Activated CD4-positive, alpha-beta T cell treated with anti-CD3 and anti-CD28 coated beads, Interleukin-2, amount 10 ng/mL, durations not matched to agents 24 days and 14 days (primary cell): ENCODE measurements at regions of chr11 and their contacts with region 1.

Region 1: GRCh38 chr11:94151903-94152677 is 23.4 kb downstream of the PANX1 start:
- DNase-seq: peak; percentile 55
- H3K4me3 Mint-ChIP-seq: no peak overlapping the region
- H3K27ac Mint-ChIP-seq: peak overlapping the region; percentile 71
- H3K4me1 Mint-ChIP-seq: peaks cover 55% of the 10 kb centered on the region
- H3K27me3 Mint-ChIP-seq: no peaks in the 10 kb centered on the region

Region 2: DNA sequence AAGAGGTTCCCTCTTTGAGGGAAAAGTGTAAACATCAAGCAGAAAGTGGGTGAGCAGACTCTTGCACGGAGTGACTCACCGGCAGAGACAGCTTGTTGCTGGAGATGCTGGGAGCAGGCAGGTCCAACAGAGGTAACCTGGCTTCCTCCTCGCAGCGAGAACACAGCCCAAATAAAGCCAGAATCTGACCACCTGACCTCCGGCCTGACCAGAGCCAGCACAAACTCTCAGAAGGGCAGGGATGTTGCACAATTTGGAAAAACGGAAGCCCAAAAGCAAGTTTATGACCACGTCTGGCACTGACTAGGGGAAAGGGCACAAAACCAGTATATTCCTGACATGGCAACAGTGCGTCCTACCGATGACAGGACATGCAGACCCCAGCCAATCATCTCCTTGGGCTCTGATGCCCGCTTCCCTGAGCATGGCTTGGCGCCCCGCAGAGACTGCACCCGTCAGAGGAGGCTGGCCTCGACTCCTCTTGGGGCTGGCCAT is 614.3 kb before region 1 on chr11:
- intact Hi-C with region 1: loop called (anchors 5 kb)
- DNase-seq: no peak
- H3K4me3 Mint-ChIP-seq: no peak overlapping the region
- H3K27ac Mint-ChIP-seq: no peak overlapping the region
- H3K4me1 Mint-ChIP-seq: peaks cover 46% of the 10 kb centered on the region
- H3K27me3 Mint-ChIP-seq: no peaks in the 10 kb centered on the region

Region 3: DNA sequence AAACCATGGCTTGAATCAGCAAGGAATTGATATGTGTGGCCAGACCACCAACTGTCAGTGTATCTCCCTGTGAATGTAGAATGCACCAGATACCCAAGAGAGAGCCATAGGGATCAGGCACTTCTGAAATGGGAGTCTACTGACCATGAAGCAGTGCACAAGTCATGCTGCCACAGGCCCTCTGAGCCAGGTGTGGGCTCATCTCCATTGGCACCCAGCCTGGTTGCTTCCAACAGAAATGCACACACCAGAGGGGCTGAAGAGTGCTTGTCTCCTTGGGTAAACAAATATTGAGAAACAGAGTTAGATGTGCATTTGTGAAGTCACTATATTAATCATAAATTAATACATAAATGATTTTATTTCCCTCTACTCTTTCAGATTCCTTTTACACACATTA is 51.8 kb before region 1 on chr11:
- intact Hi-C with region 1: no loop called
- DNase-seq: no peak
- H3K4me3 Mint-ChIP-seq: no peak overlapping the region
- H3K27ac Mint-ChIP-seq: no peak overlapping the region
- H3K4me1 Mint-ChIP-seq: no peaks in the 10 kb centered on the region
- H3K27me3 Mint-ChIP-seq: peaks cover 4% of the 10 kb centered on the region

Region 4: DNA sequence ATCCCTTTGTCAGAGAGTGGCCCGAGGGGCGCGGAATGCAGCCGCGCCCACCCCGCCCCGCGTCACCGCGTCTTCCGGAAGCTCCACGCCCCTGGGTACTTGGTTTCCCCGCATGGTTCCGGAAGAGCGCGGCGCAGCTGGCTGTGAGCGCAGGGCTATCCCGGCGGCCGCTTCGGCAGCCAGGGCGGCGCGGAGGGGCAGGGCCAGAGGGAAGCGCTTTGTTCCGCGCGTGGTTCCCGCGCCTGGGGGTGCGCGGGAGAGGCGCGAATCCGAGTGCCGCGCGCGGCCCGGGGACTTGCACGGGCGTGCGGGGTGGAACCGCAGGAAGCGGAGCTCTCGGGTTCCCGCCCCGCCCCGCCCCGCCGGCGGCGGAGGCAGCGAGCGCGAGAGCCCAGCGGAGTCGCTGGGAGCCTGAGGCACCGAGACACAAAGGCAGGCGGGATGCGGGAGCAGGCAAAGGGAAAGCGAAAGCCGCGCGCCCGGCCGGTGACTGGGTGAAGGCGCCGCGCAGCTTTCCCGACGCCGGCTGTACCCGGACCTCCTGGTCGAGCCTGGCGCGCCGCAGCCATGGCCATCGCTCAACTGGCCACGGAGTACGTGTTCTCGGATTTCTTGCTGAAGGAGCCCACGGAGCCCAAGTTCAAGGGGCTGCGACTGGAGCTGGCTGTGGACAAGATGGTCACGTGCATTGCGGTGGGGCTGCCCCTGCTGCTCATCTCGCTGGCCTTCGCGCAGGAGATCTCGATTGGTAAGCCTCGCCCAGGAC is 23.2 kb before region 1 on chr11 and contains the start of gene PANX1:
- intact Hi-C with region 1: loop called (anchors 1 kb)
- DNase-seq: peak; percentile 94
- H3K4me3 Mint-ChIP-seq: no peak within 1 kb of the TSS
- H3K27ac Mint-ChIP-seq: peak within 1 kb of the TSS; percentile 88
- H3K4me1 Mint-ChIP-seq: peaks cover 21% of the 10 kb centered on the region
- H3K27me3 Mint-ChIP-seq: no peaks in the 10 kb centered on the region
- total RNA-seq, gene PANX1: 19.7 and 20.5 TPM in 2 replicates

Region 5: GRCh38 chr11:94134651-94135512 is 17.2 kb before region 1 on chr11:
- intact Hi-C with region 1: loop called (anchors 1 kb)
- DNase-seq: peak; percentile 67
- H3K4me3 Mint-ChIP-seq: peak overlapping the region; percentile 42
- H3K27ac Mint-ChIP-seq: peak overlapping the region; percentile 81
- H3K4me1 Mint-ChIP-seq: peaks cover 42% of the 10 kb centered on the region
- H3K27me3 Mint-ChIP-seq: no peaks in the 10 kb centered on the region

Region 6: DNA sequence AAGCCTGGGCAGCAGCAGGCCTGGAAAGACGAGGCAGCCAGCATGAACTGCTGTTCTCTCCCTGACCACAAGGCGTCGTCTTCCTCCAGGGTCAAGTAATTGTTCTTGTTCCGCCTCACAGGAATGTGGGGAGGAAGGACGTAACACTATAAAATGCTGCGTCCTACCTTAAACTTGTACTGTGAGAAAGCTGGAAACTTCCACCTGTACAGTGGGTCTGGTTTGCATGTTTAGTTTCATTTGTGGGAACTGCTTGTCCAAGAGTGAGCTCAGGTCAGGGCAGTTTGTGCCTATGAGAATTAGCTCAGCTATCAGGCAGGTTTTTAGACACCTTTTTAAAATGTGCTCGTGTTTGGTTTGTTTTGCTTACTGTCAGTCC is 31.8 kb after region 1 on chr11:
- intact Hi-C with region 1: no loop called
- DNase-seq: peak; percentile 72
- H3K4me3 Mint-ChIP-seq: no peak overlapping the region
- H3K27ac Mint-ChIP-seq: no peak overlapping the region
- H3K4me1 Mint-ChIP-seq: no peaks in the 10 kb centered on the region
- H3K27me3 Mint-ChIP-seq: no peaks in the 10 kb centered on the region

Region 7: GRCh38 chr11:94342250-94342649 is 190.2 kb after region 1 on chr11:
- intact Hi-C with region 1: no loop called
- DNase-seq: no peak
- H3K4me3 Mint-ChIP-seq: no peak overlapping the region
- H3K27ac Mint-ChIP-seq: no peak overlapping the region
- H3K4me1 Mint-ChIP-seq: no peaks in the 10 kb centered on the region
- H3K27me3 Mint-ChIP-seq: no peaks in the 10 kb centered on the region

Region 8: DNA sequence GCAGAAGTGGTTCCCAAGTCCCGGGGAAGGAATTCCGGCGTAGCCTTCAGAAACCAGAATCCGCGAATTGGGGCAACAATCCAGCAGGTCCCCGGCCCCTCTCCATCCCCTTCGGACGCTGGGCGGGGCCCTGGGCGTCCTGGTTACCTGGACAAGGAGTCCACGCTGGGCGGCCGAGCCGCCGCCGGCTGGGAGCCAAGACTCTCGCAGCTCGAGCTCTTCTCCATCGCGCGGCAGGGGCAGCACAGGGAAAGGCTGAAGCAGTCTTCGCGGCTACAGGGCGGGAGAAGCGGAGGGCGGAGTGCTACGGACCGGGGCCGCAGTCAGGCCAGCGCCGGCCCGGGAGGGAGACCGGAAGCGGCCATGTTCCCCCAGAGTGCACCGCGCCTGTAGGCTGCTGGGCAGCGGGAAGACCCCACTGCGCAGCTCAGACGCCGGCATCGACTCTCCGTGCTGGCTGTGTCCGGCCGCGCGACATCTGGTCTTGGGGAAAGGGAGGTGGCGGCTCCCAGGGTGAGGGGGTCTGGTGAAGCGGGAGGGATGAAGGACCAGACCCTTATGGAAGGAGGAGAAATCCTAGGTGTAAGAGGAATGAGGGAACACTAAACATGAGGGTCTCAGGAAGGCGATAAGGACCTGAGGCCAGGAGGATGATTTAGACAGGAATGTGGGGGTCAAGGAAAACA is 1771.8 kb after region 1 on chr11 and contains the start of gene MTMR2:
- intact Hi-C with region 1: loop called (anchors 5 kb)
- DNase-seq: peak; percentile 86
- H3K4me3 Mint-ChIP-seq: peak within 1 kb of the TSS; percentile 99
- H3K27ac Mint-ChIP-seq: peak within 1 kb of the TSS; percentile 96
- H3K4me1 Mint-ChIP-seq: peaks cover 24% of the 10 kb centered on the region
- H3K27me3 Mint-ChIP-seq: peaks cover 12% of the 10 kb centered on the region
- total RNA-seq, gene MTMR2: 37.5 and 38.4 TPM in 2 replicates